K562 (cell line): ENCODE measurements at regions of chr5 and their contacts with region 1.

Region 1: DNA sequence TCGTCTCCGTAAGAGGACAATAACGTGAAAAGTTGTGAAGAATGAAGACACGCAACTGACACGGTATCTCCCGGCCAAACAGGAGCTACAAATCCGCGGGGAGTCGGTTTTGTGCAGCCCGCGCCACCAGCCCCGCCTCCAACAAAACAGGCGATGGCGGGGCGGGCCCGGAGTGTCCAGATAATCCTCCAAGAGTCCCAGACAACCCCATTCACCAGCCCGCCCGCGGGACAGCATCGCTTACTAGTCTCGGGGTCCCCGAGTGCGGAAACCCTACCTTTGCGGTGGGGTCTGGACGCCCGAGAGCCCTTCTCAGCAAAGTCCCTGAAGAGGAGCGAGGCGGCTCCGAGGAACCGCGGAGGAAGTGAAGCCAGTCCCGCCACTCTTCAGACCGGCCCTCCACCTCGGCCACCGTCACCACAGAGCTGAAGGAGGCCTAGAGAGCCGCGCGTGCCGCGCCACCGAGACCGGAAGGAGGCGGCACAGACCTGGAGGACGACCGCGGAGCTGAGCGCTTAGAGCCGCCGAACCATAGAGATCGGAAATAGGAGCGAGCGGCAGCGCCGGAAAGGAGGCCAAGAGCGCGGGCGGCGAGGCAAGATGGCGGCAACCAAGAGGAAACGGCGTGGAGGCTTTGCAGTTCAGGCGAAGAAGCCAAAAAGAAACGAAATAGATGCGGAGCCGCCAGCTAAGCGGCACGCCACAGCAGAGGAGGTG is at the starts of genes BRIX1 and RAD1:
- DNase-seq: peak; percentile 84 to 99 (median 88)
- ATAC-seq: peak; percentile 94
- H3K4me3 ChIP-seq: peak within 1 kb of the TSS; percentile 94
- H3K27ac ChIP-seq: peak within 1 kb of the TSS; percentile 95
- H3K4me1 ChIP-seq: peaks cover 8 to 10% of the 10 kb centered on the region in 2 experiments; a peak in 4 of 5 replicates
- H3K27me3 ChIP-seq: no peaks in the 10 kb centered on the region
- CTCF ChIP-seq: peak; percentile 22 to 42 (median 39); a peak in 3 of 6 replicates
- EP300 ChIP-seq: peak; percentile 57; the same call in 1 of the 2 replicates
- POLR2A ChIP-seq: peak; percentile 97
- RAD21 ChIP-seq: 0 out of 4 replicates have a peak, but pooled peaks of 1 of the 2 experiments have one; percentile 20
- polyA plus RNA-seq, gene BRIX1: 125 to 157 TPM
- polyA plus RNA-seq, gene RAD1: 120 to 148 TPM

Region 2: GRCh38 chr5:33470544-33470943 is 1444.8 kb before region 1 on chr5:
- CTCF ChIA-PET with region 1: no interaction called
- POLR2A ChIA-PET with region 1: interaction called, 4 read pairs
- in situ Hi-C with region 1: loop called (anchors 25 kb)
- intact Hi-C with region 1: no loop called
- DNase-seq: peak in 2 of 4 experiments; percentile 27 to 54
- ATAC-seq: peak; percentile 72
- H3K4me3 ChIP-seq: no peak overlapping the region
- H3K27ac ChIP-seq: no peak overlapping the region
- H3K4me1 ChIP-seq: peaks cover 0 to 18% of the 10 kb centered on the region in 2 experiments; a peak in 2 of 5 replicates
- H3K27me3 ChIP-seq: no peaks in the 10 kb centered on the region
- CTCF ChIP-seq: peak; percentile 29 to 51 (median 38); a peak in 4 of 6 replicates
- EP300 ChIP-seq: no peak
- POLR2A ChIP-seq: peak; percentile 28; the same call in 1 of the 2 replicates
- RAD21 ChIP-seq: peak; percentile 7 to 35; a peak in 2 of 4 replicates

Region 3: GRCh38 chr5:34695275-34696027 is 219.8 kb before region 1 on chr5:
- CTCF ChIA-PET with region 1: no interaction called
- POLR2A ChIA-PET with region 1: interaction called, 6 read pairs
- in situ Hi-C with region 1: no loop called
- intact Hi-C with region 1: loop called (anchors 5 kb)
- DNase-seq: no peak
- ATAC-seq: peak; percentile 50
- H3K4me3 ChIP-seq: no peak overlapping the region
- H3K27ac ChIP-seq: 0 out of 3 replicates have a peak overlapping the region, but pooled peaks have one; percentile 5
- H3K4me1 ChIP-seq: peaks cover 19 to 48% of the 10 kb centered on the region in 2 experiments
- H3K27me3 ChIP-seq: no peaks in the 10 kb centered on the region
- CTCF ChIP-seq: no peak
- EP300 ChIP-seq: no peak
- POLR2A ChIP-seq: no peak
- RAD21 ChIP-seq: no peak

Region 4: GRCh38 chr5:34891981-34892380 is 23.3 kb before region 1 on chr5:
- CTCF ChIA-PET with region 1: no interaction called
- POLR2A ChIA-PET with region 1: interaction called, 10 read pairs
- in situ Hi-C with region 1: no loop called
- intact Hi-C with region 1: no loop called
- DNase-seq: no peak
- ATAC-seq: no peak
- H3K4me3 ChIP-seq: no peak overlapping the region
- H3K27ac ChIP-seq: no peak overlapping the region
- H3K4me1 ChIP-seq: peaks cover 6 to 14% of the 10 kb centered on the region in 2 experiments
- H3K27me3 ChIP-seq: no peaks in the 10 kb centered on the region
- CTCF ChIP-seq: no peak
- EP300 ChIP-seq: no peak
- POLR2A ChIP-seq: no peak
- RAD21 ChIP-seq: no peak

Region 5: DNA sequence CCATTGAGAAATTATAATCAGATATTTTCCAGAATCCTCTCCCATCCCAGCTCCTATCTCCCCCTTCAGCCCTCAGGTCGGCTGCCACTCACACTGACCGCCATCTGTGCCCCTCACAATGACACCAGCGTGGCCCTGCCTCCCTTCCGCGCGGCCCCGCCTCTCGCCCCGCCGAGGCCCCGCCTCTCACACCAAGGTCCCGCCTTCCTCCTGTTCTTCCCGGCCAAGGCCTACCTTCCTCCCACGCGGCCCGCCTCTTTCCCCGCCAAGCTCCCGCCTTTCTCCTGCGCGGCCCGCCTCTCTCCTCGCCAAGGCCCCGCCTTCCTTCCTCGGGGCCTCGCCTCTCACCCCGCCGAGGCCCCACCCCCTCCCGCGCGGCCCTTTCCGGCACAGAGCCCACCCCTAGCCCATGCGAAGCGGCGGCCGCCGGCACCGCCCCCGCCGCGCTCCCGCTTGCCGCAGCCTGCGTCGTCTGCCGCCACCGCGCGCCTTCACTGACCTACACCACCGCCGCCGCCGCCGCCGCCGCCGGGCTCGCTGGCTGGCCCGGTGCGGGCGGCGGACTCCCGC is 13.9 kb after region 1 on chr5 and contains the start of gene DNAJC21:
- CTCF ChIA-PET with region 1: no interaction called
- POLR2A ChIA-PET with region 1: interaction called, 67 read pairs
- in situ Hi-C with region 1: no loop called
- intact Hi-C with region 1: loop called (anchors 1 kb)
- DNase-seq: peak; percentile 97 to 99 (median 98)
- ATAC-seq: peak; percentile 95
- H3K4me3 ChIP-seq: peak within 1 kb of the TSS; percentile 84
- H3K27ac ChIP-seq: peak within 1 kb of the TSS; percentile 85
- H3K4me1 ChIP-seq: peaks cover 11 to 23% of the 10 kb centered on the region in 2 experiments
- H3K27me3 ChIP-seq: no peaks in the 10 kb centered on the region
- CTCF ChIP-seq: no peak
- EP300 ChIP-seq: no peak; the same call in 1 of the 2 replicates
- POLR2A ChIP-seq: no peak; the same call in none of the 2 replicates
- RAD21 ChIP-seq: no peak
- polyA plus RNA-seq, gene DNAJC21: 26.6 to 29.7 TPM

Region 6: GRCh38 chr5:35003018-35003957 is 88.0 kb after region 1 on chr5:
- CTCF ChIA-PET with region 1: no interaction called
- POLR2A ChIA-PET with region 1: no interaction called
- in situ Hi-C with region 1: no loop called
- intact Hi-C with region 1: loop called (anchors 5 kb)
- DNase-seq: peak; percentile 78 to 82 (median 82)
- ATAC-seq: peak; percentile 96
- H3K4me3 ChIP-seq: no peak overlapping the region
- H3K27ac ChIP-seq: no peak overlapping the region
- H3K4me1 ChIP-seq: no peaks in the 10 kb centered on the region; a peak in 1 of 5 replicates
- H3K27me3 ChIP-seq: peaks cover 5 to 16% of the 10 kb centered on the region in 2 experiments; a peak in 3 of 5 replicates
- CTCF ChIP-seq: peak; percentile 85 to 96 (median 96)
- EP300 ChIP-seq: no peak
- POLR2A ChIP-seq: no peak
- RAD21 ChIP-seq: peak; percentile 66 to 77